Endothelial cell of umbilical vein (primary cell): ENCODE measurements at regions of chr19 and their contacts with region 1.

Region 1: DNA sequence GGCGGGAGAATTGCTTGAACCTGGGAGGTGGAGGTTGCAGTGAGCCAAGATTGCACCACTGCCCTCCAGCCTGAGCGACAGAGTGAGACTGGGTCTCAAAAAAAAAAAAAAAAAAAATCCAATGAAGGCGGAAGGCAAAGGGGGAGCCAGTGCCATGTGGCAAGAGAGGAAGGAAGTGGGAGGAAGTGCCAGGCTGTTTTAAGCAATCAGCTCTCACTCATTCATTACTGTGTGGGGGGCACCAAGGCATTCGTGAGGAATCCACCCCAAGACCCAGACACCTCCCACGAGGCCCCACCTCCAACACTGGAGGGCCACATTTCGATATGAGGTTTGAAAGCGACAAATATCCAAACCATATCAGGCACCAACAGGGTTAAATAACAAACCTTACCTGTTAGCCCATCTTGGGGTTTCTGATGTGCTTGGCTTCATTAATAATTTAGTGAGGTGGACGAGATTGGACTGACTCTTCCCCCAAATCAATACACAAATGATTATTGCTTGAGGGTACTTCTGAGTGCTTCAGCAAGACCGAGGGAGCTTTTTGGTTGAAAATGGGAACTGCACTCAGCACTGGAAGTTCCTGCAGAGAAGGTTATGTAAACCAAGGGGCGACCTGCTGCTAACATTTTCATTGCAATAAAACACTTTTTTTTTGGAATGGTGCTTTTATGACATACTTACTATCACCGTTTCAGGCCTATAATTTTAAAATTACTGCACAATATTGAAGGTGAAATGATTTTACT is 7.5 kb upstream of the LRP3 start:
- DNase-seq: no peak
- H3K4me3 ChIP-seq: no peak overlapping the region
- H3K27ac ChIP-seq: no peak overlapping the region
- H3K4me1 ChIP-seq: no peaks in the 10 kb centered on the region
- H3K27me3 ChIP-seq: no peaks in the 10 kb centered on the region
- CTCF ChIP-seq: no peak
- POLR2A ChIP-seq: no peak

Region 2: GRCh38 chr19:33125929-33126388 is 60.6 kb before region 1 on chr19:
- CTCF ChIA-PET with region 1: interaction called, 113 read pairs
- POLR2A ChIA-PET with region 1: no interaction called
- dilution Hi-C with region 1: no loop called
- intact Hi-C with region 1: loop called (anchors 1 kb)
- DNase-seq: peak; percentile 73
- H3K4me3 ChIP-seq: no peak overlapping the region
- H3K27ac ChIP-seq: no peak overlapping the region
- H3K4me1 ChIP-seq: no peaks in the 10 kb centered on the region
- H3K27me3 ChIP-seq: no peaks in the 10 kb centered on the region
- CTCF ChIP-seq: peak; percentile 83 to 87
- POLR2A ChIP-seq: no peak

Region 3: DNA sequence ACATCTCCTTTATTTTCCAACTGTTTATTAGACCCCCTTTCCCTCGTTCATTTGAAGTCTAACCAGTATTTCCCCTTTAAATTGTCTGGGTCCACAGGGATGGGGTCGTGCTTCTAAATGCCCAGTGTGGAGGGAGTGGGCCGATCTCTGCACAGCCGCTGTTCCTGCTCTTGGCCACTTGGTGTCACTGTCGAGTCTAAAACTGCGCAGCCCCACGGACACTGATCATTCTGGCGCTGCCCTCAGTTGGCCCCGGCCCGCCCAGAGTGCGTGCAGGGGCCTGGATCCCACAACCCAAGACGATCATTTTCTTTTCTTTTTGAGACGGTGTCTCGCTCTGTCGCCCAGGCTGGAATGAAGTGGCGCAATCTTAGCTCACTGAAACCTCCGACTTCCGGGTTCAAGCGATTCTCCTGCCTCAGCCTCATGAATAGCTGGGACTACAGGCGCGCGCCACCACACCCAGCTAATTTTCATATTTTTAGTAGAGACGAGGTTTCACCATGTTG is 42.7 kb before region 1 on chr19:
- CTCF ChIA-PET with region 1: interaction called, 68 read pairs
- POLR2A ChIA-PET with region 1: no interaction called
- dilution Hi-C with region 1: no loop called
- intact Hi-C with region 1: loop called (anchors 1 kb)
- DNase-seq: peak; percentile 60
- H3K4me3 ChIP-seq: no peak overlapping the region
- H3K27ac ChIP-seq: no peak overlapping the region
- H3K4me1 ChIP-seq: no peaks in the 10 kb centered on the region
- H3K27me3 ChIP-seq: no peaks in the 10 kb centered on the region
- CTCF ChIP-seq: peak; percentile 89 to 95
- POLR2A ChIP-seq: no peak

Region 4: DNA sequence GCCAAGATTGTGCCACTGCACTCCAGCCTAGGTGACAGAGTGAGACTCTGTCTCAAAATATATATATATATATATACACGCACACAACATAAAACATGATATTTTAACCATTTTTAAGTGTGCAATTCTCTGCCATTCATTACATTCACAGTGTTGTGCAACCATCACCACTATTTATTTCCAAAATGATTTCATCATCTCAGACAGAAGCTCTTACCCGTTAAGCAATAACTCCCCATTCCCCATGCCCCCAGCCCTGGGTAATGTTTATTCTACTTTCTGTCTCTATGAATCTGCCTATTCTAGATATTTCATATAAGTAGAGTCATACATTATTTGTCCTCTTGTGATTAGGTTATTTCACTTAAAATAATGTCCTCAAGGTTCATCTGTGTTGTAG is 34.4 kb before region 1 on chr19:
- CTCF ChIA-PET with region 1: interaction called, 17 read pairs
- POLR2A ChIA-PET with region 1: no interaction called
- dilution Hi-C with region 1: no loop called
- intact Hi-C with region 1: no loop called
- DNase-seq: no peak
- H3K4me3 ChIP-seq: no peak overlapping the region
- H3K27ac ChIP-seq: no peak overlapping the region
- H3K4me1 ChIP-seq: no peaks in the 10 kb centered on the region
- H3K27me3 ChIP-seq: no peaks in the 10 kb centered on the region
- CTCF ChIP-seq: no peak
- POLR2A ChIP-seq: no peak

Region 5: GRCh38 chr19:33161201-33161600 is 25.4 kb before region 1 on chr19:
- CTCF ChIA-PET with region 1: interaction called, 39 read pairs
- POLR2A ChIA-PET with region 1: no interaction called
- dilution Hi-C with region 1: no loop called
- intact Hi-C with region 1: no loop called
- DNase-seq: no peak
- H3K4me3 ChIP-seq: no peak overlapping the region
- H3K27ac ChIP-seq: no peak overlapping the region
- H3K4me1 ChIP-seq: no peaks in the 10 kb centered on the region
- H3K27me3 ChIP-seq: no peaks in the 10 kb centered on the region
- CTCF ChIP-seq: no peak
- POLR2A ChIP-seq: no peak

Region 6: DNA sequence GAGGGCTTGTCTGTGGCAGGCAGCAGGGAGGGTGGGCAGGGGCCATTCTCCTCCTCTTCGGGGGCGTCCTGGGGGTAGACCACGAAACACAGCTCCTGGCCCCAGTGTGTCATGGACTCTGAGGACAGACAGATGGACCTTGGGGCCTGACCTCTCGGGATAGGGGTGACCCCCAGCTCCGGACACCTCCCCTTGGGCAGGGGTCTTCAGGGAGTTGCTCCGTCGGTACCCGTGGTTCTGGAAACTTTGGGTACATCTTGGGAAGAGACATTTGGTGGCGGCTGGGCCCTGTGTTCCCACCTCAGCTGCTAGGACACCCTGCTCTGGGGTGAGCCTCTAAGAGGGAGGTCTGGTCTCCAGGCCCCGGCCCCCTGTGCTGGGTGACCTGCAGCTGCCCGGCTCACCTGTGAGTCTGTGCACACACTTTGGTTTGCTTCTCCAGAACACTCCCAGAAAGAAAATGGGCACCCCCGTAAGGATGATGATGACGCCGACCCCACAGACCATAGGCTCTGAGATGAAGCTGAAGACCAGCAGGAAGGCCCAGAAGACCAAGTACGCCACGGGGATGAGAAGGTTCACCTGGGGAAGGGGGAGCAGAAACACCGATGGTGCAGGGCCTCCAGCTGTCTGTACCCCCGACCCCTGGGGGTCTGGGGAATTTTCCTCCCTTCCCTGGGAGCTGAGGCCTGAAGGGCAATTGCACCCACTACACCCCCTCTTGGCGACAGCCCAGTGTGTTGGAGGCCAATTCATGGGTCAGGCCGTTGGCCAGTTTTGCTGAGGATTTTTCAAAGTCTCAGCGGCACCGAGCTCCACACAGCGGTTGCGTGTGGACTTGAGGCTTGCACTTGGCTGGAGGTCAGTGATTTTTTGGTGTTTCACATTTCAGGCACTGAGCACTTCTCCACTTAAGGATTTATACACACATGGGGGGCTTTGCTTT is 22.6 kb after region 1 on chr19:
- CTCF ChIA-PET with region 1: interaction called, 13 read pairs
- POLR2A ChIA-PET with region 1: no interaction called
- dilution Hi-C with region 1: no loop called
- intact Hi-C with region 1: no loop called
- DNase-seq: no peak
- H3K4me3 ChIP-seq: no peak overlapping the region
- H3K27ac ChIP-seq: no peak overlapping the region
- H3K4me1 ChIP-seq: no peaks in the 10 kb centered on the region
- H3K27me3 ChIP-seq: no peaks in the 10 kb centered on the region
- CTCF ChIP-seq: no peak
- POLR2A ChIP-seq: no peak

Region 7: GRCh38 chr19:33332248-33332647 is 145.6 kb after region 1 on chr19:
- CTCF ChIA-PET with region 1: no interaction called
- POLR2A ChIA-PET with region 1: no interaction called
- dilution Hi-C with region 1: no loop called
- intact Hi-C with region 1: no loop called
- DNase-seq: no peak
- H3K4me3 ChIP-seq: no peak overlapping the region
- H3K27ac ChIP-seq: no peak overlapping the region
- H3K4me1 ChIP-seq: no peaks in the 10 kb centered on the region
- H3K27me3 ChIP-seq: peaks cover 0 to 2% of the 10 kb centered on the region in 2 experiments
- CTCF ChIP-seq: no peak
- POLR2A ChIP-seq: no peak